ENCODE measurements at regions of chr3 and their contacts with region 1.

Region 1: DNA sequence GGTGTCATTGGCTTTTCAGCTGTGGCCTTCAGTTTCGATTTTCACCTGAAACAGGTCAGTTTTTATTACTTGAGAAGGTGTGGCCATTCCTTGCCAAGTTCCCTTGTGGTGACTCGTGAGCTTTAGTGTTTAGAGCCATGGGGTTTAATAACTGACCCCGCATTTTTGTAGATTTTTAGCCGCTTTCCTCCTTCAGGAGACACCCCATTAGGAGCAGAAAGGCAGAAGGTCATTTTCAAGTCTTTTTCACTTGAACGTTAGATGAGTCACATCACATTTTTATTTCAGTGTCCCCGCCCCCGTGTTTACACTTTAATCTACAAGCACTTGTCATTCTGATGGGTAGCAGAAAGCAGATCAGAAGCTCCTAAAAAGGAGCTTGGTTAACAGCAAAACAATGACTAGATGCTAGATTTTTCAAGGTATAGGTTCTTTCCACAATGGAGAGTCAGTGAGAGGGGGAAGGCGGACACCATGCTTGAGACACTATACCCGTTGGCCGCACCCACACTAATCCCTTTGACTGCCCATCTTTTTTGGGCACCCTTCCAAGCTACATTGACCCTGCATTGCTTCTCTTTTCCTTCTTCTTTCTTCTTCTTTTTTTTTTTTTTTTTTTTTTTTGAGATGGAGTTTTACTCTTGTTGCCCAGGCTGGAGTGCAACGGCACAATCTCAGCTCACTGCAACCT is 132.7 kb downstream of the GHSR start:
- DNase-seq: no peak
- ATAC-seq: no peak
- H3K4me3 ChIP-seq: no peak overlapping the region
- H3K4me3 Mint-ChIP-seq: no peak overlapping the region
- H3K27ac ChIP-seq: no peak overlapping the region
- H3K27ac Mint-ChIP-seq: no peak overlapping the region
- H3K4me1 ChIP-seq: no peaks in the 10 kb centered on the region
- H3K4me1 Mint-ChIP-seq: peaks cover 0 to 2% (median 0%) of the 10 kb centered on the region in 3 donors
- H3K27me3 ChIP-seq: no peaks in the 10 kb centered on the region
- H3K27me3 Mint-ChIP-seq: no peaks in the 10 kb centered on the region

Region 2: GRCh38 chr3:171676601-171677175 is 638.9 kb before region 1 on chr3:
- CTCF ChIA-PET with region 1: no interaction called
- POLR2A ChIA-PET with region 1: no interaction called
- DNase-seq: no peak
- ATAC-seq: no peak
- H3K4me3 ChIP-seq: no peak overlapping the region
- H3K4me3 Mint-ChIP-seq: no peak overlapping the region
- H3K27ac ChIP-seq: no peak overlapping the region
- H3K27ac Mint-ChIP-seq: no peak overlapping the region
- H3K4me1 ChIP-seq: no peaks in the 10 kb centered on the region
- H3K4me1 Mint-ChIP-seq: no peaks in the 10 kb centered on the region
- H3K27me3 ChIP-seq: no peaks in the 10 kb centered on the region
- H3K27me3 Mint-ChIP-seq: peaks cover 0 to 6% of the 10 kb centered on the region in 2 donors

Region 3: GRCh38 chr3:172138795-172139441 is 176.6 kb before region 1 on chr3:
- CTCF ChIA-PET with region 1: no interaction called
- POLR2A ChIA-PET with region 1: no interaction called
- DNase-seq: peak in 3 of 35 experiments; percentile 17 to 25 (median 21)
- ATAC-seq: no peak
- H3K4me3 ChIP-seq: no peak overlapping the region
- H3K4me3 Mint-ChIP-seq: peak overlapping the region in 2 of 3 donors; percentile 11 to 44
- H3K27ac ChIP-seq: no peak overlapping the region
- H3K27ac Mint-ChIP-seq: peak overlapping the region in 1 of 2 donors; percentile 48
- H3K4me1 ChIP-seq: peaks cover 9 to 11% of the 10 kb centered on the region in 2 experiments
- H3K4me1 Mint-ChIP-seq: peaks cover 57 to 78% (median 62%) of the 10 kb centered on the region in 3 donors
- H3K27me3 ChIP-seq: no peaks in the 10 kb centered on the region
- H3K27me3 Mint-ChIP-seq: no peaks in the 10 kb centered on the region

Region 4: DNA sequence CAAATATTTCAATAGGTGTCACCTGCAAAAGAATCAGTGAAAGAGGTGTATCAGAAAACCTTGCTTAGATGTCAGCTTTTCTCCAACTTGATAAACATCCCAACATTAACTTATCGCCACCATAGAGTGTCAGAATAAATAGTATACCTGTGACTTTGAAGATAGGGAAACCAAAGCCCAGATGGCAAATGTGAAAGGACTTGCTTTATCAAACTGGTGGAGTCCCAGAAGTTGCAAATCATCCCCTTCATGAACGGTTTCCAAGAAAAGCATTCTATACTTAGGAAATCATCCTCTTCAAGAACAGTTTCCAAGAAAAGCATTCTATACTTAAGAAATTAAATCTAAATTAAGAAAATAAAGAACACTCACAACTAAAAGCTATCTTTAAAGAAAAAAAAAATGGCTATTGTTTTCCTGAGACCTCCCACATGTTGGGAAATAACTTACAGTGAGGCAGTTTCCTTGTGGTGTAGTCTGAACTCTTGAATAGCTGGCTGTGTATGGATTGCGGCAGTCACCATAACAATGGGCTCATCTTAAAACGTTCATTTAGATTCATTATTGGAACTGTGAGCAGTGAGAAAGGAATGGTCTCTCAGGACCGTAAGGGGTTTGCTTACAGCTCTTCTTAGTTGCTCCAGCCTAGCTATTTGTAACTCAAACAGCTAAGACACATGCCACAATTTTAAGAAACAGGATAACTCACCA is 76.2 kb after region 1 on chr3:
- CTCF ChIA-PET with region 1: no interaction called
- POLR2A ChIA-PET with region 1: no interaction called
- DNase-seq: no peak
- ATAC-seq: no peak
- H3K4me3 ChIP-seq: no peak overlapping the region
- H3K4me3 Mint-ChIP-seq: no peak overlapping the region
- H3K27ac ChIP-seq: no peak overlapping the region
- H3K27ac Mint-ChIP-seq: no peak overlapping the region
- H3K4me1 ChIP-seq: no peaks in the 10 kb centered on the region
- H3K4me1 Mint-ChIP-seq: no peaks in the 10 kb centered on the region
- H3K27me3 ChIP-seq: no peaks in the 10 kb centered on the region
- H3K27me3 Mint-ChIP-seq: no peaks in the 10 kb centered on the region

Region 5: DNA sequence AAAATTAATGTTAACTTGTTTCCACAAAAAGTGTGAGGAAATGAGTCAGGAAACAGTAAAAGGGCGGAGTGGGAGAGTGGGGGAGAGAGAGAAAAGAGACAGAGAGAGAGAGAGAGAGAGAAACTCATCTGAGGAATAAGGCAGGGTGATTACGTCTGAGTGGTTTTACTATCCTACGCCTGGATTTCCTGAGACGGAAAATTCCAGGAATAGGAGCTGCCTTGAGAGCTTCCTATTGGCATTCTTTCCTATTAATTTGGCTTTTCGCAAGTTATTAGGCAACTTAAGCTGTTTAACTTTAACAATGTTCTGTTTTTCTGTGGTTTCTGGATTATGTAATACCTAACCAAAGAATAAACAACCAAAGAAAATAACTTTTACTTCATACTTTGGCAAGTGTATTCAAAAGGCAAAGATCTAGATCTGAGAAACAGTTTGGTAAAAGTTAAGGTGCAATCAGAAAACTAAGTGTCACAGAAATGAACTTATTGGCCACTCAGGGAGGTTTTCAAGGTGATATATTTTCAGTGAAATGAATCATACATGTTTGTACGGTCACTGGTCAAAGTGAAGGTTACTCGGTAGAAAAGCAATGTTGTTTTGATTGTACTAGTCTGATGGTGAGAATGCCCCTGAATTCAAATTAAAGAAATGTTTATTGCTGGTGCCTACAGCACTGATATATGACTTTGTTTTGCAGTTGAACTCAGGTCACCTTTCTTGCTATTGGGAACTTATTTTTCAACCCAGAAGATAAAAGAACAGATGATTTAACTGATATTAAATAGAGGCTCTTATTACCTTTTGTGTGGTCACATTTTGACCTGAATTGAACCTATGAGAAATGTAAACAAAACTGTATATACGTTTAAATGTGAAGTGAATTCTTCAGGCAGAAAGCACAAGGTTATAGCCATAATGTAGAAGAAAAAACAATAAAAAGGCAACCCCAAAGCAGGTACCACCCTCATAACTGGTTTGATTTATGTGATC is 247.6 kb after region 1 on chr3:
- CTCF ChIA-PET with region 1: interaction called in 1 of 2 experiments, 10 read pairs
- POLR2A ChIA-PET with region 1: no interaction called
- DNase-seq: peak in 2 of 35 experiments; percentile 3 to 30
- ATAC-seq: peak in 3 of 4 experiments; percentile 32 to 45 (median 38)
- H3K4me3 ChIP-seq: no peak overlapping the region
- H3K4me3 Mint-ChIP-seq: peak overlapping the region; percentile 46 to 75 (median 65)
- H3K27ac ChIP-seq: peak overlapping the region; percentile 54
- H3K27ac Mint-ChIP-seq: peak overlapping the region; percentile 93 to 97
- H3K4me1 ChIP-seq: peaks cover 4 to 10% of the 10 kb centered on the region in 2 experiments
- H3K4me1 Mint-ChIP-seq: peaks cover 26 to 28% (median 27%) of the 10 kb centered on the region in 3 donors
- H3K27me3 ChIP-seq: no peaks in the 10 kb centered on the region
- H3K27me3 Mint-ChIP-seq: no peaks in the 10 kb centered on the region

Region 6: DNA sequence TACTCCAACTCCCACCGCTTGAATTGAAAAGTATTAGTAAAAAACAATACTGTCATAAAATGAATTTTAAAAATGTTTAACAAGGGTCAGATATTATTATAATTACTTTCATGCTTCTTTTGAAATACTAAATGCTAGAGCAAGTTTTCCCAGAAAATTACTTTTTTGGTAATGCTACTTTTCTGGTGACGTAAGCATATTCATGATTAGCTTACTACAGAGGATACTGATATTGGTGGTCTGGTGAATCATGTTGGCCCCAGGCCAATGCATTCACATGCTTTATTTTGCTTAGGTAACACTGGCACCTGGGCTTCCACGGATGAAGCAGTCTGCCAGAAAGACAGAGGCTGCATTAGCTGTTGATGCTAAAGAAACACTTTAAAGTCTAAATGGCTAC is 813.1 kb after region 1 on chr3:
- CTCF ChIA-PET with region 1: no interaction called
- POLR2A ChIA-PET with region 1: no interaction called
- DNase-seq: no peak
- ATAC-seq: no peak
- H3K4me3 ChIP-seq: no peak overlapping the region
- H3K4me3 Mint-ChIP-seq: no peak overlapping the region
- H3K27ac ChIP-seq: no peak overlapping the region
- H3K27ac Mint-ChIP-seq: no peak overlapping the region
- H3K4me1 ChIP-seq: no peaks in the 10 kb centered on the region
- H3K4me1 Mint-ChIP-seq: no peaks in the 10 kb centered on the region
- H3K27me3 ChIP-seq: no peaks in the 10 kb centered on the region
- H3K27me3 Mint-ChIP-seq: no peaks in the 10 kb centered on the region